ENCODE measurements at regions of chr2 and their contacts with region 1.

Region 1: DNA sequence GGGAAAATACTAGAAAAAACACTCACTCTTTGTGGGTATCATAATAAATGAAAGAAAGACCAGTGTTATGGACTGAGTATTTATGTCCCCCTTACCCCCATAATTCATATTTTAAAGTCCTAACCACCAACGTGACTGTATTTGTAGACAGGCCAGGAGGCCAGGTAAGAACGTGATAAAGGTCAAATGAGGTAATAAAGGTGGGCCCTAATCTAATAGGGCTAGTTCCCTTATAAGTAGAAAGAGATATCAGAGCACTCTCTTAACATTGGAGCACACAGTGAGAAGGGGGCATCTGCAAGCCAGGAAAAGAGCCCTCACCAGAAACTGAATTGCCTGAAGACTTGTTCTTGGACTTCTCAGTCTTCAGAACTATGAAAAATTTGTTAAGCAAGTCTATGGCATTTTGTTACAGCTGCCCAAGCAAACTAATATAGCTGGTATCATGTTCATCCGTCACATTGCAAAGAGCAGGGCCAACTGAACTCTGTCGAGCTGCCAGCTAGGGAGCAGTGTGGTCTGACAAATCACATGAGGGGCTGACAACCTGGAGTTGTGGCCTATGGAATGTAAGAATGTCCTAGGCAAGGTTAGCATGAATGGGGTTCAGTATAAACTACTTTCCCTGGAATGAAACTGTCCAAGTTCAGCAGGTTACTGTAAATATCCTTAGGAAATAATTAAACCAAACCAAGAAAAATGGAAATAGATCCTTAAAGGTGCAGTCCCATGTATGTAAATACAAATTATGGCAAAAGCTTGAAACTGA is 280.9 kb downstream of the ZNF385B start:
- DNase-seq: no peak
- H3K4me3 ChIP-seq: no peak overlapping the region
- H3K27ac ChIP-seq: no peak overlapping the region
- H3K4me1 ChIP-seq: no peaks in the 10 kb centered on the region
- H3K27me3 ChIP-seq: no peaks in the 10 kb centered on the region
- CTCF ChIP-seq: no peak

Region 2: GRCh38 chr2:179513181-179513580 is 67.4 kb before region 1 on chr2:
- CTCF ChIA-PET with region 1: no interaction called
- dilution Hi-C with region 1: loop called (anchors 5 kb)
- in situ Hi-C with region 1: no loop called
- intact Hi-C with region 1: no loop called
- DNase-seq: no peak
- H3K4me3 ChIP-seq: no peak overlapping the region
- H3K27ac ChIP-seq: no peak overlapping the region
- H3K4me1 ChIP-seq: no peaks in the 10 kb centered on the region
- H3K27me3 ChIP-seq: no peaks in the 10 kb centered on the region
- CTCF ChIP-seq: no peak

Region 3: GRCh38 chr2:179850188-179850587 is 269.6 kb after region 1 on chr2:
- CTCF ChIA-PET with region 1: no interaction called
- dilution Hi-C with region 1: no loop called
- in situ Hi-C with region 1: no loop called
- intact Hi-C with region 1: no loop called
- DNase-seq: peak; percentile 24
- H3K4me3 ChIP-seq: no peak overlapping the region
- H3K27ac ChIP-seq: no peak overlapping the region
- H3K4me1 ChIP-seq: no peaks in the 10 kb centered on the region
- H3K27me3 ChIP-seq: peaks cover 4% of the 10 kb centered on the region
- CTCF ChIP-seq: peak in 1 of 2 donors; percentile 43

Region 4: GRCh38 chr2:180733337-180733736 is 1152.8 kb after region 1 on chr2:
- CTCF ChIA-PET with region 1: no interaction called
- dilution Hi-C with region 1: no loop called
- in situ Hi-C with region 1: no loop called
- intact Hi-C with region 1: no loop called
- DNase-seq: no peak
- H3K4me3 ChIP-seq: no peak overlapping the region
- H3K27ac ChIP-seq: no peak overlapping the region
- H3K4me1 ChIP-seq: peaks cover 22% of the 10 kb centered on the region
- H3K27me3 ChIP-seq: no peaks in the 10 kb centered on the region
- CTCF ChIP-seq: no peak

Measured in mammary epithelial cell (primary cell).